ENCODE measurements at regions of chr9 and their contacts with region 1.

Region 1: GRCh38 chr9:37465249-37466036 is at the start of gene ZBTB5:
- DNase-seq: peak; percentile 99
- H3K4me3 Mint-ChIP-seq: peak within 1 kb of the TSS; percentile 99
- H3K27ac Mint-ChIP-seq: peak within 1 kb of the TSS; percentile 98
- H3K4me1 Mint-ChIP-seq: peaks cover 35% of the 10 kb centered on the region
- H3K27me3 Mint-ChIP-seq: no peaks in the 10 kb centered on the region
- total RNA-seq, gene ZBTB5: 9.2 and 9.5 TPM in 2 replicates

Region 2: GRCh38 chr9:37079370-37080164 is 385.9 kb before region 1 on chr9:
- intact Hi-C with region 1: loop called (anchors 1 kb)
- DNase-seq: peak; percentile 97
- H3K4me3 Mint-ChIP-seq: peak overlapping the region; percentile 95
- H3K27ac Mint-ChIP-seq: peak overlapping the region; percentile 96
- H3K4me1 Mint-ChIP-seq: peaks cover 23% of the 10 kb centered on the region
- H3K27me3 Mint-ChIP-seq: peaks cover 7% of the 10 kb centered on the region

Region 3: DNA sequence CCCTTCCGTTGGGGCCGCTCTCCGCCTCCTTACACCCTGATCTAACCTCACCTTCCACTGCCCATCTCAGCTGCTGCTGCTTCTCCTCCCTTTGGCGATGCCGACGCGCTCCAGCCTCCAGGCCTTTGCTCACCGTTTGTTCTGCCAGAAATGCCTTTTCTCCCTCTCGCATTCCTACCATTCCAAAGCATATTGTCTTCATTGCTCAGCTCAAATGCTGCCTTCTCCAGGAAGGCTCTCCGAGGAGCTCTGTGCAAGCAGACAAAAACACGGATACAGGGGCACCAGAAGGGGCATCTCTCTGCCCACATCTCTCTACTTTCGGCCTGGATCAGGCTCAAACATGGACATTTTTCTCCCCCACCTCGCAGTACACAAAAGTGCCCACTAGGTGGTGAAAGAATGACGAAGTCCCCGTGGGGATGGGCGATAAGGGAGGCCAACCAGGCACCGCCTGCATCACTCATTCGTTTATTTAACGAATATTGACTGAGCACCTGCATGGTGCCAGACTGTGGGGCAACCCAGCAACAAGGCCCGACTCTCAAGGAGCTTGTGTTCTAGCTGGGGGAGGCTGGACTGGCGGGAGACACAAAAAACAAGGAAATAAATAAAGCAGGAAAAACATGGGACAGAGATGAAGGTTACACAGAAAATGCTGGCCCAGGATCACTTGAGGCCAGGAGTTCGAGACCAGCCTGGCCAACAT is 50.3 kb before region 1 on chr9:
- intact Hi-C with region 1: loop called (anchors 2 kb)
- DNase-seq: peak; percentile 94
- H3K4me3 Mint-ChIP-seq: no peak overlapping the region
- H3K27ac Mint-ChIP-seq: peak overlapping the region; percentile 51
- H3K4me1 Mint-ChIP-seq: peaks cover 7% of the 10 kb centered on the region
- H3K27me3 Mint-ChIP-seq: peaks cover 2% of the 10 kb centered on the region

Region 4: DNA sequence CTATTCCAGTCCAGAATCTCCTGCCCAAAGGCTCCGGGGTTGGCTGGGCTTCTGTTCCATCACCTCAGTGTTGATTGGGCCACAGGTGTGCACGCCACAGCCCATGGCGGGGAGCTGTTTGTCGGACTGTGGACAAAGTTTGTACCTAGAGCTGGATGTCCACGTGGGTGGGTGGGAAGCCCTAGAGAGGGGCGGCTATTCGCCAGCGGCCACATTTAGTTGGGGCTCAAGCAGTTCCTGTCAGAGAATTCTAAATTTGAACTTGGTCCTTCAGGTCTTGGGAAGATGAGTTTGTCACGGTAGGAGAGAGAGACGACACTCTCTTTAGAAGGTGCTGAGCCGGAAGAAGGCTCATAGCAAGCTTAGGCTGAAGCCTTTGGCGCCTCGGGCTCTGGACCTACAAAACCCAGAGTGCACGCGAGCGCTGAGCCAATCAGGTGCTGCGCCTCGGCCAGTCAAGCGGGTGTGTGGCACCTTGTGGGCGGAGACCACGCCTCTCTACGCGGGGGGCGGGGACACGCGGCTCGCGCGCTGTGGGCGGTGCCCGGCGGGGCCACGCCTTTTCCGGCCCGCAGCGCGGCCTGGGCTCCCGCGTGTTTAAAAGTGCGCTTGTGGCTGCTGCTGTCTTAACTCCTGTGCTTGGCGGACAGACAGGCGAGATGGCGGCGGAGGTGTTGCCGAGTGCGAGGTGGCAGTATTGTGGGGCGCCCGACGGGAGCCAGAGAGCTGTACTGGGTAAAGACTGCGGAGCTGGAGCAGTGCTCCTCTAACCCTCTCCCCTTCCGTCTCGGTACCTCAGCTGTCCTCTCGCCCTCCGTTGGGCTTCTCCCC is 20.2 kb after region 1 on chr9 and contains the start of gene POLR1E:
- intact Hi-C with region 1: loop called (anchors 1 kb)
- DNase-seq: peak; percentile 99
- H3K4me3 Mint-ChIP-seq: peak within 1 kb of the TSS; percentile 91
- H3K27ac Mint-ChIP-seq: peak within 1 kb of the TSS; percentile 94
- H3K4me1 Mint-ChIP-seq: peaks cover 33% of the 10 kb centered on the region
- H3K27me3 Mint-ChIP-seq: peaks cover 9% of the 10 kb centered on the region
- total RNA-seq, gene POLR1E: 60.0 and 64.0 TPM in 2 replicates

Region 5: GRCh38 chr9:37528652-37529510 is 63.4 kb after region 1 on chr9:
- intact Hi-C with region 1: no loop called
- DNase-seq: peak; percentile 68
- H3K4me3 Mint-ChIP-seq: no peak overlapping the region
- H3K27ac Mint-ChIP-seq: peak overlapping the region; percentile 45
- H3K4me1 Mint-ChIP-seq: peaks cover 9% of the 10 kb centered on the region
- H3K27me3 Mint-ChIP-seq: no peaks in the 10 kb centered on the region

Region 6: GRCh38 chr9:37800631-37801286 is 335.3 kb after region 1 on chr9 and contains the start of gene DCAF10:
- intact Hi-C with region 1: loop called (anchors 1 kb)
- DNase-seq: peak; percentile 98
- H3K4me3 Mint-ChIP-seq: peak within 1 kb of the TSS; percentile 94
- H3K27ac Mint-ChIP-seq: peak within 1 kb of the TSS; percentile 88
- H3K4me1 Mint-ChIP-seq: peaks cover 29% of the 10 kb centered on the region
- H3K27me3 Mint-ChIP-seq: no peaks in the 10 kb centered on the region
- total RNA-seq, gene DCAF10: 14.5 and 17.8 TPM in 2 replicates